HAP-1 (cell line): ENCODE measurements at regions of chr2 and their contacts with region 1.

Region 1: DNA sequence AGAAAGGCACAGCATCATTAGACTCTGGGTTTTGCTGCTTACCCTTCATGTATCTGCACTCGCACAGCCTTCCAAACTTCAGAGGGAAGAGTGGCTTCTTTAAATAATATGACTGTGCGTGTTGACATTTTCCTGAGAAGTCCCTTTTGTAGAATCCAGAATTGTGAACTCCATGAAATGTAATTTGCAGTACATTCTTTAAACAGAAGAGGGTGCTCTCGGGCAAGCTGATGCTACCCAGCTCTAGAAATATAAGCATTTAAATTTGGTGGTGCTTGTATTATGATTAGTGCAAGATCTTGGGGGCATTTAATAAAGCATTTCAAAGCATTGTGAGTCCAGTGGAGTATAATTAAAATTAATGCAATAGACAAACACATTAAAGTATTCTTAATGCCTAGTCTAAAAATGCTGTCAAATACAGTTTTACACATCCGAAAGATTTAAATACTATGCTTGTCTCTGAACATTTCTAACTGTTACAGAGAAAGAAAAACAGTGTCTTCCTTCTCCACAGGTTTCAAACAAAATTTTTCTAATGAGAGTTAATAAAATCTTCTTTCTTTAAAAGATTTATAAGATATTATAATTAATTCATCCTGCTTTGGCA is 17.3 kb upstream of the GTF2A1L start:
- DNase-seq: peak; percentile 25 to 57
- H3K4me3 ChIP-seq: no peak overlapping the region
- H3K4me1 ChIP-seq: no peaks in the 10 kb centered on the region
- H3K27me3 ChIP-seq: no peaks in the 10 kb centered on the region

Region 2: DNA sequence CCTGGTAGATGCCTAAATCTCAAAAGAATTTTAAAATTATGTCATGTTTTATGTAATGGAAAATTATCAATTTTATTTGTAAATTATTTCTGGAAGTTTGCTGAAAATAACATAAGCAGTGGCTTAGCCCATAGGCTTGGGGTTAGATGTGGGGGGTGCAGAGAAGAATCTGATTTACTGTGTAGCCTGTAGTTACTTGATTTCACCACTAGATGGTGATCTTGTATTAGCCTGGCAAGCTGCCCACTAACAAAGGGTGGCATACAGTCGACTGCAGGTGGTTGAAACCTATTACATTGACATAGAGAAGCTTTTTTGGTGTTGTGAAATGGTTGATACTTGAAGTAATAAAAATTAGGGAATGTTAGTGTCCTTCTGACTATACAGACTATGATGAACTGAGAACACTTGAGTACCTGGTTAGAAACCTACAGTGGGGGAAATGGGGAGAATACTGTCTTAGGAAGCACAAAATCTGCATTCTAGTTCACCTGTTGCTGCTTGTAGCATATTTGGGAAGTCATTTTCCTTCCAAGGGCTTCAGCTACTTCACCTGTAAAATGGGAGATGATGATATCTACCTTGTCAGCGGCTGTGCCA is 346.2 kb after region 1 on chr2:
- in situ Hi-C with region 1: loop called (anchors 25 kb)
- DNase-seq: peak; percentile 62 to 64
- H3K4me3 ChIP-seq: no peak overlapping the region
- H3K4me1 ChIP-seq: no peaks in the 10 kb centered on the region
- H3K27me3 ChIP-seq: no peaks in the 10 kb centered on the region